ENCODE measurements at regions of chr6 and their contacts with region 1.

Region 1: GRCh38 chr6:164013480-164014230 is 599.1 kb downstream of the QKI start:
- DNase-seq: no peak
- ATAC-seq: no peak

Region 2: DNA sequence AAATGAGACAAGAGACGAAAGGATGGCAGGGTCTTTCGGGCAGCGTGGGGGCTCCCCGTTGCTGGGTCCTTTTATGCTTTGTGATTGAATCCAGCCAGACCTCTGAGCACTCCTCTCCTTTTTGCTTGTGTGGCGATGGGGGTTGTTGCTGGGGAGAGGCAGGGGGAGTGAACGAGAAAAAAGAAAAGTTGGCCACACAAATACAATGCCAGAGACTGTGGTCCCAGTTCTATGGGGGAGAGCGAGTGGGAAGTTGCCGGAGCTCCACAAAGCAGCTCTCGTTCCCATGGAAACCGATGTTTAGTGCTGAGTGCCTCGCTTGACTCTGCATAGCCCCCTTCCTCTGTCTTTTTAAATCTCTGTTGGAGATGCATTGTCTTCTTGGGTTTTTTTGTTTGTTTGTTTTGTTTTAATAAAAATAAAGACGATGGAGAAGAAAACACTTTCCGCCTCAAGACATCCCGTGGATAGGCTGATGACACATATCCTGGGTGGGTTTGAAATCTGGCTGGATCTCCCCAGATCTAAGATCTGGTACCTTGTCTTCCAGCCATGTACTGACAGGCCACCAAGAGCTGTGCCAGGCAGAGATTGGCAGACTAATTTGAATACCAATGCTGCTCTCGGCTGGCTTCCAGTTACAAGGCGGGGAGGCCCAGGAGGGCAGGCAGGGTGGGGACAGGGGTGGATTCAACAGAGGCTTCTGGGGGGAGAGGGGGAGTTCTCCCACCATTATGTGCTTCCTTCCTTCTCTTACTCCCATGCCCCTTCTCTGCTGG is 69.9 kb before region 1 on chr6:
- intact Hi-C with region 1: no loop called
- DNase-seq: no peak
- ATAC-seq: peak; percentile 56

Region 3: GRCh38 chr6:163984124-163984936 is 29.3 kb before region 1 on chr6:
- intact Hi-C with region 1: no loop called
- DNase-seq: no peak
- ATAC-seq: no peak

Region 4: DNA sequence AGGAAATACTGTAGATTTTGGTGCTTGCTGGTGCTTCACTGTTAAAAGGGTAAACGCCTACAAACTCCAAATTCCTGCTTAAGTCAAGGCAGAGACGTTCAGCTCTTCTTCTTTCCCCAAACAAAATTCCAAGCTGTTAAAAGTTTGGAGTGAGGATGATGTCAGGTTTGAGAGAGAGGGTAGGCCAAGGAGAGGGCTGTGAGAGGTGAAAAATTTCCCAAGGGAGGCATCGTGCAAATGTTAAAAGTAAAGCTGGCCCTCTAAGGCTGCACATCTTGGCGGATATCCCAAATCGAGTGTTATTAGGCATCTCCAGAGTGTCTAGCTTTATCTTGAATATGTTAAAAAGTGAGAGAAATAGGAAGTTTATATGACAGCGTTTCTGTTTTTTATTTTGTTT is 52.7 kb after region 1 on chr6:
- intact Hi-C with region 1: loop called (anchors 2 kb)
- DNase-seq: no peak
- ATAC-seq: peak; percentile 40

Region 5: GRCh38 chr6:164533069-164533362 is 519.4 kb after region 1 on chr6:
- intact Hi-C with region 1: no loop called
- DNase-seq: no peak
- ATAC-seq: no peak